H1 (cell line): ENCODE measurements at regions of chr7 and their contacts with region 1.

Region 1: DNA sequence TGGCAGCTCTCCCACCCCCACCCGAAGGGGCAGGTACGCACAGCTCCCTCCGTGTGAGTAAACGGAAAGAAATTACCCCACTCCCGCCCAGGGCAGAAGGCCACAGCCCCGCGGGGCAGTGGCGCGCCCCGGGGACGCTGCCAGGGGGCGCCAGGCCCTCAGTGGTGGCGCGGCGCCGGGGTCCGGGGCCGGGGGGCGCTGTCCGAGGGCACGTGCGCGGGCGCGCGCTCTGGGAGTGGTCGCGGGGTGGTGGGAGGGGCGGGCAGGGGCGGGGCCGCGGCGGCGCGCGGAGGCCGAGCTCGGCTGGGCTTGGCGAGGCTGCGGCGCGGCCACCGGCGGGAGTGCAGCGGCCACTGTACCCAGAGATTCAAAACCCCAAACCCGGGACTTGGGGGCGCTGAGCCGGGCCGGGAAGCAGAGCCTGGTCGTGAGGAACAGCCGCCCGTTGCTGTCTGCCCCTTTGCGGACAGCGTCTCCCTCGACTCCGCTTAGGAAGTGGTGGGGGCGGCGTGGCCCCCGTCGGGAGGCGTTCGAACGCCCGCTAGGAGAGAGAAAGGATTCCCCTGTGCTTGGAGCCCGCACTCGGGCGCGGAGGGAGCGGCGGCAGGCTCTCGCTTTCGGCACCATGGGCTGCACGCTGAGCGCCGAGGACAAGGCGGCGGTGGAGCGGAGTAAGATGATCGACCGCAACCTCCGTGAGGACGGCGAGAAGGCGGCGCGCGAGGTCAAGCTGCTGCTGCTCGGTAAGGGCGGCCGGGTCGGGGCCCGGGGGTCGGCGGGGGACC is at the start of gene GNAI1:
- DNase-seq: peak; percentile 21 to 87
- H3K4me3 ChIP-seq: peak within 1 kb of the TSS; percentile 91 to 98 (median 95)
- H3K27ac ChIP-seq: peak within 1 kb of the TSS; percentile 76
- H3K4me1 ChIP-seq: peaks cover 0 to 10% (median 5%) of the 10 kb centered on the region in 4 experiments; a peak in 2 of 7 replicates
- H3K27me3 ChIP-seq: peaks cover 0 to 6% (median 0%) of the 10 kb centered on the region in 4 experiments; a peak in 4 of 7 replicates
- CTCF ChIP-seq: peak; percentile 48 to 88 (median 58)
- EP300 ChIP-seq: no peak
- POLR2A ChIP-seq: peak; percentile 24 to 61; a peak in 2 of 3 replicates
- RAD21 ChIP-seq: peak; percentile 59 to 81
- total RNA-seq, gene GNAI1: 20.0 and 29.5 TPM in 2 replicates

Region 2: DNA sequence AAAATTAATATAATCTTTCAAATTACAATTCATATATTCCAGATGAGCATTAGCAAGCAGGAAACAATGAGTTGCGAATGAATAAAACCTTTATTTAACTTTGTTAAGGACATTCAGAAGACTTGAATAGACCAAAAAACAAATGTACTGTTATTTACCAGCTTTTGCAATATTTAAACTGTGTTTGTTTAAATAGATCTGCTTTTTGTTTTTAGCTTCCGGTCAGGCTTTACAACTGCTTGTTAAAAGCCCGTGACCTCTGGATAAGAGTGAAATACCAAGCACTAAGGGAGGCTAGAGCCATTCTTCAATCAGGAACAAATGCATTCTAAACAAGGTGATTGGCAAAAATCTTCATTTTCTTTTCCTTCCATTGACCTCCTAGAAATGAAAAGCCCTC is 184.9 kb before region 1 on chr7:
- CTCF ChIA-PET with region 1: no interaction called
- POLR2A ChIA-PET with region 1: no interaction called
- DNase-seq: no peak
- H3K4me3 ChIP-seq: no peak overlapping the region
- H3K27ac ChIP-seq: no peak overlapping the region
- H3K4me1 ChIP-seq: no peaks in the 10 kb centered on the region
- H3K27me3 ChIP-seq: no peaks in the 10 kb centered on the region
- CTCF ChIP-seq: no peak
- EP300 ChIP-seq: no peak
- POLR2A ChIP-seq: no peak
- RAD21 ChIP-seq: no peak

Region 3: GRCh38 chr7:80124526-80125264 is 10.0 kb before region 1 on chr7:
- CTCF ChIA-PET with region 1: no interaction called
- POLR2A ChIA-PET with region 1: no interaction called
- DNase-seq: no peak
- H3K4me3 ChIP-seq: no peak overlapping the region
- H3K27ac ChIP-seq: no peak overlapping the region
- H3K4me1 ChIP-seq: peaks cover 1 to 16% (median 10%) of the 10 kb centered on the region in 4 experiments; a peak in 5 of 7 replicates
- H3K27me3 ChIP-seq: peaks cover 7 to 31% (median 18%) of the 10 kb centered on the region in 4 experiments; a peak in 6 of 7 replicates
- CTCF ChIP-seq: no peak
- EP300 ChIP-seq: no peak
- POLR2A ChIP-seq: no peak
- RAD21 ChIP-seq: no peak

Region 4: DNA sequence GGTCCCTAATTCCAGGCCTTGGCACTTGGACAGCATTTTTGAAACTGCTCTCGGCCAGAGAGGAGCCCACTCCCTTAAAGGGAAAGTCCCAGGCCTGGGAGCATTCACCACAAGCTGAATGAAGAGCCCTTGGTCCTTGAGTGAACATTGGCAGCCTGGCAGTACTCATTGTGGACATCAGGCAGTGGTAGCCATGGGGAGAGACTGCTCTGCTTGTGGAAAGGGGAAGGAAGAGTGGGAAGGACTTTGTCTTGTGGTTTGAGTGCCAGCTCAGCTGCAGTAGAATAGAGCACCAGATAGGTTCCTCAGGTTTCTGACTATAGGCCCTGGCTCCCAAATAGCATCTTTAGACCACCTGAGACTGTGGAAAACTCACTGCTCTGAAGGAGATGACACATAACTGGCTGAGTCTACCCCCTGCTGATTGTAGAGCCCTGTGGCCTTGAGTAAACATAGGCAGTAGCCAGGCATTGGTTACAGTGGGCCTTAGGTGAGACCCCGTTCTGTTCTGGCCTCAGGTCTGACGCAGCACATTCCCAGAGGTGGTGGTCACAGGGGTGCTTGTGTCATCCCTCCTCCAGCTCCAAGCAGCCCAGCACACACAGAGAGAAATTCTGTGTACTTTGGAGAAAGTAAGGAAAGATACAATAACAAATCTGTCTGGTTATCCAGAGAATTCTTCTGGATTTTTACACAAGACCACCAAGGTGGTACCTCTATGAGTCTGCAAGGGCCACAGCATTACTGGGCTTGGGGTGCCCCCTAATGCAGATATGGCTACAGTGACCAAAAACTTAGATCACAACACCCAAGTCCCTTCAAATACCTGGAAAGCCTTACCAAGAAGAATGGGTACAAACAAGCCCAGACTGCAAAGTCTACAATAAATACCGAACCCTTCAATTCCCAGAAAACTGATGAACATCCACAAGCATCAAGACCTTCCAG is 153.7 kb after region 1 on chr7:
- CTCF ChIA-PET with region 1: interaction called, 11 read pairs
- POLR2A ChIA-PET with region 1: interaction called, 3 read pairs
- DNase-seq: peak in 1 of 2 experiments; percentile 5
- H3K4me3 ChIP-seq: no peak overlapping the region
- H3K27ac ChIP-seq: no peak overlapping the region
- H3K4me1 ChIP-seq: no peaks in the 10 kb centered on the region
- H3K27me3 ChIP-seq: no peaks in the 10 kb centered on the region; a peak in 1 of 7 replicates
- CTCF ChIP-seq: peak in 2 of 3 experiments; percentile 44 to 46; a peak in 3 of 4 replicates
- EP300 ChIP-seq: no peak
- POLR2A ChIP-seq: no peak
- RAD21 ChIP-seq: peak; percentile 78 to 80